ENCODE measurements at regions of chr4 and their contacts with region 1.

Region 1: DNA sequence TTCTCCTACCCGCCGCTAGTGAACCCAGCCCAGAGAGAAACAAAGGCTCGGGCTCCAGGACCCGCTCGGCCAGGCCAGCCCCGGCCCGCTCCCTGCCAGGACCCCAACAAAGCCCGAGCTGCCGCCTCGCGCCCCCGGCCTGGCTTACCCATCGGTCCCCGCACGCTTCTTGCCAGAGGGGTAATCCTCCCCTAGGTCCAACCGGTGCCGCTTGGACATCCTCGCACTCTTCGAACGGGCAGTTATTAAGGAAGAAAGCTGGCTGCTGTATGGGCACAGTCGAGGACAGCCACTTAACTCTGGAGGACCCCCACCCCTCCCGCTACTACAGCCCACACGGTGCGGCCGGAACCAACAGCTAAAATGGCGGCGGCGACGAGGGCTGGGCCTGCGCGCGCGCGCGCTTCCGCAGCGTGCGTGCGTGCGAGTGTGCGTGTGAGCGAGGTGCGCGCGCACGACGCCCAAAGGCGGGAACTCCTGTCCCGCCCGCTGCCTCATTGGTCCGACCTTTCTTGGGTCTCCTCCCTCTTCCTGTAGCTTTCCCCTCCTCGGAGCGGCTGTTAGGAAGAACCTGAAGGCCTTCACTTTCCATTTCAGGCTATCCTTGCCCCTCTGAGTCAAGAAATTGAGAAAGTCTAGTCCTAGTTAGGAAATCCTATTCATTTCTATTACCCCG is at the start of gene DHX15:
- DNase-seq: peak; percentile 93 to 95
- H3K4me3 ChIP-seq: peak within 1 kb of the TSS; percentile 74
- H3K4me3 Mint-ChIP-seq: peak within 1 kb of the TSS; percentile 96
- H3K27ac Mint-ChIP-seq: peak within 1 kb of the TSS; percentile 97
- H3K4me1 ChIP-seq: peaks cover 18% of the 10 kb centered on the region
- H3K4me1 Mint-ChIP-seq: peaks cover 8% of the 10 kb centered on the region
- H3K27me3 ChIP-seq: no peaks in the 10 kb centered on the region
- H3K27me3 Mint-ChIP-seq: no peaks in the 10 kb centered on the region
- CTCF ChIP-seq: no peak
- total RNA-seq, gene DHX15: 154 and 155 TPM in 2 replicates

Region 2: GRCh38 chr4:24557026-24558025 is 27.0 kb before region 1 on chr4:
- CTCF ChIA-PET with region 1: no interaction called
- POLR2A ChIA-PET with region 1: interaction called, 13 read pairs
- intact Hi-C with region 1: no loop called
- DNase-seq: peak in 1 of 2 experiments; percentile 15
- H3K4me3 ChIP-seq: no peak overlapping the region
- H3K4me3 Mint-ChIP-seq: no peak overlapping the region
- H3K27ac Mint-ChIP-seq: no peak overlapping the region
- H3K4me1 ChIP-seq: peaks cover 28% of the 10 kb centered on the region
- H3K4me1 Mint-ChIP-seq: peaks cover 20% of the 10 kb centered on the region
- H3K27me3 ChIP-seq: no peaks in the 10 kb centered on the region
- H3K27me3 Mint-ChIP-seq: no peaks in the 10 kb centered on the region
- CTCF ChIP-seq: no peak

Region 3: GRCh38 chr4:24594891-24595290 is 10.6 kb after region 1 on chr4:
- CTCF ChIA-PET with region 1: interaction called, 5 read pairs
- POLR2A ChIA-PET with region 1: interaction called, 19 read pairs
- intact Hi-C with region 1: loop called (anchors 1 kb)
- DNase-seq: peak in 1 of 2 experiments; percentile 66
- H3K4me3 ChIP-seq: no peak overlapping the region
- H3K4me3 Mint-ChIP-seq: peak overlapping the region; percentile 40
- H3K27ac Mint-ChIP-seq: peak overlapping the region; percentile 99
- H3K4me1 ChIP-seq: peaks cover 59% of the 10 kb centered on the region
- H3K4me1 Mint-ChIP-seq: peaks cover 38% of the 10 kb centered on the region
- H3K27me3 ChIP-seq: no peaks in the 10 kb centered on the region
- H3K27me3 Mint-ChIP-seq: no peaks in the 10 kb centered on the region
- CTCF ChIP-seq: no peak

Region 4: DNA sequence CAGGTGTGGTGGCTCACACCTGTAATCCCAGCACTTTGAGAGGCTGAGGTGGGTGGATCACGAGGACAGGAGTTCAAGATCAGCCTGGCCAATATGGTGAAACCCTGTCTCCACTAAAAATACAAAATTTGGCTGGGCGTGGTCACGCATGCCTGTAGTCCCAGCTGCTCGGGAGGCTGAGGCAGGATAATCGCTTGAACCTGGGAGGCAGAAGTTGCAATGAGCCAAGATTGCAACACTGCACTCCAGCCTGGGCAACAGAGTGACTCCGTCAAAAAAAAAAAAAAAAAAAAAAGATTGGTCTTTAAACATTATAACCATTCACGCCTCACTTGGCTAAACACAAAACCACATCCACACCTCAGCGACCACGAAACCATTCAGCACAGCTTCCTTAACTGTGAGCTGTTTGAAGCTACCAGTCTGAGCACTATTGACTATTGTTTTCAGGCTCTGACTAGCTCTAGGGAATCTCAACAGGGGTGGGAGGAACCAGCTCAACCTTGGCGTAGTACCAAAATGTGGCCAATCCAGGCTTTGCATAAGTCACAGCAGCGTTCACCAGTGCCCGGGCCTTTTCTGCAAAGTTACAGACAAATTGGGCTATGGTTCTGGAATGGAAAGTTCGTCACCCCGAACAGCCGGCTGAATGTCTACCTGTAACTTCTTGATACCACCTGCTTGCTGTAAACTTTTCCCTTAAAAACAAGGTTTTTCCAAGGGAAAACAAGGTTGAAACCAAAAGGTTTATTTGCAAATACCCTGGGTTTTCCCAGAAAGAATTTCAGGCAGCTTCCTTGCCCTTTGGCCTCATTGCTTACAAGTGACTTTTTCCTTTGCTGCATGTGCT is 73.7 kb after region 1 on chr4:
- CTCF ChIA-PET with region 1: no interaction called
- POLR2A ChIA-PET with region 1: interaction called, 7 read pairs
- intact Hi-C with region 1: loop called (anchors 5 kb)
- DNase-seq: peak; percentile 15 to 40
- H3K4me3 ChIP-seq: no peak overlapping the region
- H3K4me3 Mint-ChIP-seq: no peak overlapping the region
- H3K27ac Mint-ChIP-seq: peak overlapping the region; percentile 40
- H3K4me1 ChIP-seq: peaks cover 36% of the 10 kb centered on the region
- H3K4me1 Mint-ChIP-seq: peaks cover 40% of the 10 kb centered on the region
- H3K27me3 ChIP-seq: no peaks in the 10 kb centered on the region
- H3K27me3 Mint-ChIP-seq: no peaks in the 10 kb centered on the region
- CTCF ChIP-seq: no peak

Region 5: GRCh38 chr4:24794916-24795665 is 210.8 kb after region 1 on chr4 and contains the start of gene SOD3:
- CTCF ChIA-PET with region 1: no interaction called
- POLR2A ChIA-PET with region 1: no interaction called
- intact Hi-C with region 1: loop called (anchors 10 kb)
- DNase-seq: peak; percentile 63 to 66
- H3K4me3 ChIP-seq: peak within 1 kb of the TSS; percentile 15; the same call in 1 of the 2 replicates
- H3K4me3 Mint-ChIP-seq: peak within 1 kb of the TSS; percentile 63
- H3K27ac Mint-ChIP-seq: peak within 1 kb of the TSS; percentile 82
- H3K4me1 ChIP-seq: peaks cover 18% of the 10 kb centered on the region
- H3K4me1 Mint-ChIP-seq: peaks cover 14% of the 10 kb centered on the region
- H3K27me3 ChIP-seq: no peaks in the 10 kb centered on the region
- H3K27me3 Mint-ChIP-seq: no peaks in the 10 kb centered on the region
- CTCF ChIP-seq: no peak
- total RNA-seq, gene SOD3: 3.8 and 6.6 TPM in 2 replicates